Left colon (tissue), 2 donors: ENCODE measurements at regions of chr10 and their contacts with region 1.

Region 1: DNA sequence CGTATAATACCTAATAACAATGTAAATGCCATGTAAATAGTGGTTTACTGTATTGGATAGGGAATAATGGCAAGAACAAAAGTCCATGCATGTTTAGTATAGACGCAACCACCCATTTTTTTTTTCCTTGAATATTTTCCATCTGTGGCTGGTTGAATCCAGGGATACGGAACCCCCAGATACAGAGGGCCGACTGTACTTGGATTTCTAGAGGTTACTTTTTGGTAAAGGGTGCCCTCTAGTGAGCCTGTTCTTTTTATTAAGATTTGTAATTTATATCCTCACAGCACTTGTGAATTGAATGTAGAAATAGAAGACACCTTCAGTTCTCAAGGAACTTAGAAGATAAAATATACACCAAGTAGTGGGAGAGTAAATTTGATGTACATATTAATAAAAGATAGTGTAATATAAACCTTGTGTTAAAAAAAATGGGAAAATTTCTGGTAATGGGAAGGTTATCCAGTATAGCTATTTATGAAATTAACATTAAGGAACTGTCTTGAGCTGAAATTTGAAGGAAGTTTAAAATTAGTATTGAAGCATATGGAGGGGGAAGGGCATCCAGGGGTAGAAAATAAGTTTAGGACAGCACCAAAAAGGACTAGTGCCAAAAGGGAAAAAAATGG is 32.0 kb downstream of the EXOC6 start:
- DNase-seq: no peak
- ATAC-seq: peak; percentile 50

Region 2: GRCh38 chr10:92790440-92790839 is 89.9 kb before region 1 on chr10:
- intact Hi-C with region 1: no loop called
- DNase-seq: no peak
- ATAC-seq: no peak

Region 3: DNA sequence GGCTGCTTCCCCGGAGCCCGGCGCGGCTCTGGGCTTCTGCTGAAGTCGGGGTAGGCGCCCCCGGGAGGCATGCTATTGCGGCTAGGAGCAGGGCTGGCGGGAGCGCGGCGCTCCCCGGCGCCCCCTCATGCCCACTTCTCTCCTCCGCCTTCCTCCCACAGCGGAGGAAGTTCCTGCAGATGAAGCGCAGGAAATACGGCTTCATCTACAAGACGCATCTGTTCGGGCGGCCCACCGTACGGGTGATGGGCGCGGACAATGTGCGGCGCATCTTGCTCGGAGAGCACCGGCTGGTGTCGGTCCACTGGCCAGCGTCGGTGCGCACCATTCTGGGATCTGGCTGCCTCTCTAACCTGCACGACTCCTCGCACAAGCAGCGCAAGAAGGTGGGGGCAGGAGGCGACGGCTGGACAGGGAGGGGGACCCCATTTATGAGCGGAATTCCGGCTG is 193.8 kb after region 1 on chr10:
- intact Hi-C with region 1: loop called in 1 of 2 experiments (anchors 10 kb)
- DNase-seq: no peak
- ATAC-seq: no peak